ENCODE measurements at regions of chr6 and their contacts with region 1.

Region 1: DNA sequence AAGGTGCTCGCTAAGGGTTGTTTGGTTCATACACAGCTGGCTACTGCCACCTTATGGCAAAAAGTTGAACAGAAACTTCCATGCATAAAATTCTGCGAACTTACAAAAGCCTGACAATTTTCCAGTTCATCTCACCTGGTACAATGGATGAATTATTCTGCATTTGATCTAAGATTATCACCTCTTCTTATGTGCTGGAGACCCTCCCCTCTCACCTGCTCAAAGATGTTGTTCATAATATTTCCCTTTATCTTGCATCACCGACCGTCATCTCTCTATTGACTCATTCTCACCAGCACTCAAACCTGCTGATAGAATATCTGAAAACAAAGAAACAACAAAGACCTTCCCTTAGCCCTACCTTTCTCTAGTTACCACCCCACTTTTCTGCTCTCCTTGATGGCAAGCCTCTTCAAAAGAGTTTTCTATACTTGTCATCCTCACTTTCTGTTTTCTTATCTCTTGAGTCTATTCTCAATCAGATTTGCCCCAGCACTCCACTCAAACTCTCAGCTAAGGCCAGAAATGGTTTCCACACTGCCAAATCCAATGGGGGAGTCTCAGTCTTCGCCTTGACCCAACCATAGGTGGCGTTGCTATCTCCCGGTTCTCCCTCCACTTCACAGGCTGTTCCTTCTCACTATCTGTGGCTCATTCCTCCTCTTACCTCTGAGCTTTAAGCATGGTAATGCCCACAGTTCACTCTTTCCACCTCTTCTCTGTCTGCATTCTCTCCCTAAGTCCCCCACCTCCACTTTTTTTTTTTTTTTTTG is 25.8 kb downstream of the SNRNP48 start:
- DNase-seq: peak; percentile 64
- H3K4me3 ChIP-seq: no peak overlapping the region
- H3K27ac ChIP-seq: no peak overlapping the region
- H3K4me1 ChIP-seq: no peaks in the 10 kb centered on the region
- H3K27me3 ChIP-seq: no peaks in the 10 kb centered on the region
- CTCF ChIP-seq: peak; percentile 54 to 66
- POLR2A ChIP-seq: no peak

Region 2: DNA sequence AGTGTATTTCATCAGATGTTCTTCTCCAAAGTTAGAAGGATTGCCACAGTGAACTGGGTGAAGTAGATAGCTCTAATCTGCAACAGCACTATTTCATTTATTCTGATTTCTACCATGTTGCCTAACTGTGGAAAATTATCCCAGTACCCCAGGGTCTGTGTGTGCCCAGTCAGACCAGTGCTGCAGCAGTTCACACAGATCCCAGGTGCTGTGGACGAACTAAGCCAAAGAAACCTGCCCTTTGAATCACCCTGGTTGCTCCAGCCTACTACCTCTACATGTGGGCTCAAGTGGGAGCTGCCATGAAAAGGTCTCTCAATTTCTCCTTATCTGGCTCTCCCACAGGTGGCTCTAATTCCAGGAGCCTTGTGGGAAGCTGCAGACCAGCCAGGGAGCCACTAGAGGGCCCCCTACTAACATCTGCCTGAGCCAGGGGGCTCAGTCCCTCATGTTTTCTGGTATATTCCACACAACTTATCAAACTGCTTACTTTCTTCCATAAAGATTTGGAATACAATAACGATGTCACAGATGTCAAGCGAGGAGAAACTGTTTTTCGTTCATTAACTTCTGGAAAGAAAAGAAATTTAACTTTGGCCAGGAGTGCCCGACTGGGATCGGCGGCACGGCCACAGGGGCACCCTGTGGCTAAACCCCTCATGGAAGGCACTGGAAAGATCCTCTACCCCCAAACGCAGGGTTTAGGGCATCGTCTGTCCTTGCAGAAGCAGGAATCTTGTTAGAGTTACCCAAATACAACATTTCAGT is 1058.9 kb before region 1 on chr6:
- CTCF ChIA-PET with region 1: interaction called, 8 read pairs
- POLR2A ChIA-PET with region 1: no interaction called
- dilution Hi-C with region 1: no loop called
- intact Hi-C with region 1: loop called (anchors 1 kb)
- DNase-seq: peak; percentile 44
- H3K4me3 ChIP-seq: no peak overlapping the region
- H3K27ac ChIP-seq: no peak overlapping the region
- H3K4me1 ChIP-seq: no peaks in the 10 kb centered on the region
- H3K27me3 ChIP-seq: no peaks in the 10 kb centered on the region
- CTCF ChIP-seq: peak; percentile 84 to 89
- POLR2A ChIP-seq: no peak

Region 3: DNA sequence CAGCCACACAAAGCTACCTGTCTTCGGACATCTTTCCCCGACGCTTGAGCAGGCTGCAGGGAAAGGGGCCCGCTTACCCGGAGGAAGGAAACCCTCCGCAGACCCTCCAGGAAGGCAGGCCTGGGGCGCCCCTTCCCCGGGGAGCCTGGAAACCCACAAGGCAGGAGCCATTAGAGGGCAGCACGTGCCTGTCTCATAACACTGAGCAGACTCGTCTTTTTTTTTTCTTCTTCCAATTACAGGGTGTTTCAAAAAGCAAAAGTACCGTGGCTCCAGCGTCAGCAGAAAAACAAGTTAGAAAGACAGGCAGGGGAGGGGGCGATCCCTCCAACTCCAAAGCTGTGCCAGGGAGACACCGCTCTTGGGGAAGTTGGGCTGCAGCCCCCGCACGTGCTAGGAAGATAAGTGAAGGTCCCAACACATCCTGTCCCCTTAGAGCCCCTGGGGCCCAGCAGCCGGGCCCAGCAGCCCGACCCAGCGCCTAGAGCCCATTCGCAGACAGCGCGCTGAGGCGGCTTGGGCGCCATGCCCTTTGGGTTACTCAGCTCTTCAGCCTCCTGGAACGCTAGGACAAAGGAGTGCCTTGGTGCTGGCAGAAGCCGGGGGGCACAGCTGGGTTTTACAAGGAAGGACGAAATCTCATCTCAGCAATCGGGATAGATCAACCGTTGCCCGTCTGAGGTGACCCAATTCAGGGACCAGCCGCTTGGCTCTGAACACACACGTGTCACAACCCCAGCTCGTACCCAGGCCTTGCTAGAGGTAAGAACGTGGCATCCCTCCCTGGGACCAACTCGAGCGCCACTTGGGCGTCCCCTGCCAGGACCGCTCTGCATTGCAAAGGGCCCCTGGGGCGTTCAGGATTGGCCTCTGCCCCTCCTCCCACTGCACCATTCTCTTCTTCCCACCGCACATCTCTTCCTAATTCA is 891.0 kb before region 1 on chr6:
- CTCF ChIA-PET with region 1: no interaction called
- POLR2A ChIA-PET with region 1: no interaction called
- dilution Hi-C with region 1: no loop called
- intact Hi-C with region 1: loop called (anchors 1 kb)
- DNase-seq: peak; percentile 83
- H3K4me3 ChIP-seq: peak overlapping the region in 1 of 3 experiments; percentile 16
- H3K27ac ChIP-seq: peak overlapping the region; percentile 59
- H3K4me1 ChIP-seq: peaks cover 19% of the 10 kb centered on the region
- H3K27me3 ChIP-seq: peaks cover 0 to 2% of the 10 kb centered on the region in 2 experiments
- CTCF ChIP-seq: peak; percentile 57 to 60
- POLR2A ChIP-seq: no peak

Region 4: GRCh38 chr6:7276199-7276524 is 339.6 kb before region 1 on chr6:
- CTCF ChIA-PET with region 1: interaction called, 71 read pairs
- POLR2A ChIA-PET with region 1: interaction called, 4 read pairs
- dilution Hi-C with region 1: no loop called
- intact Hi-C with region 1: loop called (anchors 1 kb)
- DNase-seq: no peak
- H3K4me3 ChIP-seq: no peak overlapping the region
- H3K27ac ChIP-seq: no peak overlapping the region
- H3K4me1 ChIP-seq: no peaks in the 10 kb centered on the region
- H3K27me3 ChIP-seq: no peaks in the 10 kb centered on the region
- CTCF ChIP-seq: no peak
- POLR2A ChIP-seq: no peak

Region 5: DNA sequence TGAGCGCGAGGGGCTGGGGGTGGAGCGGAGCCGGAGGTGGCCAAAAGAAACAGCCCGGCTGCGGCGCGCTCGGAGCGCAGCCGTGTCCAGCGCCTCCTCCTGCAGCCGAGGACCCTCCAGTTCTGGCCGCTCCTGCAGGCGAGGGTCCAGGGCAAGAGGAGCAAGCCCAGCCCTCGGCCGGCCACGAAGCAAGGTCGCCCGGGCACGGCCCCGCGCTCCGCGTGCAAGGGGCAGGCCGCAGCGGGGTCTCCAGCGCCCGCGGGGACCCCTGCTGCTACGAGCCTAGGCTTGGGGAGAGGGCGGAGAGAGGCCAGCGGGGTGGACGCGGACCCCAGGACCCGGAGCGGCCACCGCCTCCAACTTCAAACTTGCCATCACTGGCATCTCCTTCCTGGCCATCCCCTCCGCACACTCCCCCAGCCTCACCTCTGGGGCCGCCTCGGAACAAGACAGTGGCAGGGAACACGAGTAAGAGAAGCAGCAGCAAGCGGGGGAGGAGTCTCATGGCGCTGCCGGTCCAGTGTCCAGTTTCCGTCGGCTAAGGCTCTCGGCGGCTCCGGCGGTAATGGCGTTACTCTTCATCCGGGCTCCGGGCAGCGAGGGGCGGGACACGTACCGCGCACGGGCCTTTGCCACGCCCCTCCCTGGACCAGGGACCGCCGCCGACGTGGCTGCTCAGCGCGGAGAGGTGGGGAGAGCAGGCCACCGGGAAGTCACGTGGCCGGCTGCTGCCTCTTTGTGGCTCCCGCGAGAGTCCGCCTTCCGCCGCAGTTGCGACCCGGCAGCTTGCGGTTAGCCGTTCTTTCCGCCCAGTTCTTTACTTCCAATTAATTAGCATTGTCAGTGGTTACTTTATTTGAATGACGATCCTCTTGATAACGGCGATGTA is 302.9 kb before region 1 on chr6 and contains the start of gene SSR1:
- CTCF ChIA-PET with region 1: no interaction called
- POLR2A ChIA-PET with region 1: no interaction called
- dilution Hi-C with region 1: no loop called
- intact Hi-C with region 1: loop called (anchors 1 kb)
- DNase-seq: peak; percentile 98
- H3K4me3 ChIP-seq: peak within 1 kb of the TSS; percentile 95 to 99 (median 98)
- H3K27ac ChIP-seq: peak within 1 kb of the TSS; percentile 88
- H3K4me1 ChIP-seq: peaks cover 16% of the 10 kb centered on the region
- H3K27me3 ChIP-seq: peaks cover 0 to 2% of the 10 kb centered on the region in 2 experiments
- CTCF ChIP-seq: no peak
- POLR2A ChIP-seq: peak; percentile 89
- total RNA-seq, gene SSR1: 149 and 187 TPM in 2 replicates

Region 6: GRCh38 chr6:7424967-7425807 is 190.6 kb before region 1 on chr6:
- CTCF ChIA-PET with region 1: interaction called, 4 read pairs
- POLR2A ChIA-PET with region 1: no interaction called
- dilution Hi-C with region 1: no loop called
- intact Hi-C with region 1: loop called (anchors 2 kb)
- DNase-seq: peak; percentile 6
- H3K4me3 ChIP-seq: no peak overlapping the region
- H3K27ac ChIP-seq: no peak overlapping the region
- H3K4me1 ChIP-seq: no peaks in the 10 kb centered on the region
- H3K27me3 ChIP-seq: no peaks in the 10 kb centered on the region
- CTCF ChIP-seq: peak in 1 of 2 donors; percentile 12
- POLR2A ChIP-seq: no peak

Measured in endothelial cell of umbilical vein (primary cell).